Activated naive CD4-positive, alpha-beta T cell treated with anti-CD3 and anti-CD28 coated beads for 36 hours (primary cell): ENCODE measurements at regions of chrX and their contacts with region 1.

Region 1: GRCh38 chrX:110086916-110087484 is 84.1 kb downstream of the TMEM164 start:
- DNase-seq: no peak
- H3K4me3 Mint-ChIP-seq: no peak overlapping the region
- H3K27ac Mint-ChIP-seq: no peak overlapping the region
- H3K4me1 Mint-ChIP-seq: peaks cover 16% of the 10 kb centered on the region
- H3K27me3 Mint-ChIP-seq: no peaks in the 10 kb centered on the region

Region 2: DNA sequence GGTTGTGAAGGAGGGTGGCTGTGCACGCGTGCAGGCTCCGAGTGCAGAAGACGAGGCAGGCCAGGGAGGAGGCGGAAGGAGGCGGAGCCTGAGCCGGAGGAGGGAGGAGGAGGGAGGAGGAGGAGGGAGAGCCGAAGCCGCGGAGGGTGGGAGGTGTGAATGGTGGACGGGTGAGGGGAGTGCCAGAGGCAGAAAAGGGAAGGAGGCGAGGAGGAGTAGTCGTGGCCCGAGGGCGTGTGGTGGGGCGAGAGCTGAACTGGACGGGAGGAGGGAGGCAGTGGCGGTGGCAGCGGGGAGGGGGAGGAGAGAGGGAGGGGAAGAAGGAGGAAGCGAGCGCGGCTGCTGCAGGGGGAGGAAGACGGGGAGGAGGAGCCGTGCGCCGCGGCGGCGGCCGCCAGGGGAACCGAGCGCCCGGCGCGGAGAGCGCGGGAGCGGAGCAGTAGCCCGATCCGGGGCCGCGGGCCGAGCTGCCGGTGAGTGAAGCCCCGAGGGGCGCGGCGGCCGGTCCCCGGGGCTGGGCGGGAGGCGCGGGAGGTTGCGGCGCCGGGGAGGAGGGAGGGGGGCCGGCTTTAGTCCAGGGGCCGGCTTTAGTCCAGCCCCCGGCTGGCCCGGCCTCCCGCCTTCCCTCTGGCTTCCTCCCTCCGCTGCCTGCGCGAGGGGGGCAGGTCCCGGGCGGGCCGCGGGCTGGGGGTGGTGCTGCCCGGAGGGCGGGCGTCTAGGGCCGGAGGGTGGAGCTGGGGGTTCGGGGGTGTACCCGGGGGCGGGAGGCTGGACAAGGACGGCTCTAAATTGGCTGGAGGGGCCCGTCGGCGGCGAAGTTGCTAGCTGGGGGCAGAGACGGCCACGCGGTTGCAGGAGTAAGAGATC is 84.5 kb before region 1 on chrX and contains the start of gene TMEM164:
- CTCF ChIA-PET with region 1: no interaction called
- intact Hi-C with region 1: loop called (anchors 1 kb)
- DNase-seq: peak; percentile 83
- H3K4me3 Mint-ChIP-seq: peak within 1 kb of the TSS; percentile 83
- H3K27ac Mint-ChIP-seq: peak within 1 kb of the TSS; percentile 81
- H3K4me1 Mint-ChIP-seq: peaks cover 31% of the 10 kb centered on the region
- H3K27me3 Mint-ChIP-seq: no peaks in the 10 kb centered on the region
- total RNA-seq, gene TMEM164: 11.9 to 12.0 TPM

Region 3: GRCh38 chrX:110133735-110134370 is 46.9 kb after region 1 on chrX:
- CTCF ChIA-PET with region 1: no interaction called
- intact Hi-C with region 1: loop called (anchors 1 kb)
- DNase-seq: no peak
- H3K4me3 Mint-ChIP-seq: no peak overlapping the region
- H3K27ac Mint-ChIP-seq: no peak overlapping the region
- H3K4me1 Mint-ChIP-seq: peaks cover 18% of the 10 kb centered on the region
- H3K27me3 Mint-ChIP-seq: no peaks in the 10 kb centered on the region

Region 4: DNA sequence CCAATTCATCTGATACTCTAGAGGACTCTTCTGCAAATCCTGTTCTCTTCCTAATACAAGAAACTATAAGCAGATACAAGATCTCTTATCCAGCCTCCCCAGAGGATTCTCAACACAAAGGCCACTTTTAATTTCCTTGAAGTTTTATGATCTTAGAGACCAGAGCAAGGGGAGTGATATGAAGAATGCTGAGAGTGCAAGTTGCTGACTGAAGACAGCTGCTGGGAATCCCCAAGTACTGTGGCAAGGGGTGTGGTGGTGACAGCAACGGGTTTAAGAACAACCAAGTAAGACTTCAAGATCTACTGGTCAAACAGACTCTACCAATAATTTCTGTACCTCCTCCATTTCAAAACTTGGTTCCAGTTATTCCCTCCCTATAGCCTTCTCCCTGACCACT is 223.9 kb after region 1 on chrX:
- CTCF ChIA-PET with region 1: interaction called, 3 read pairs
- intact Hi-C with region 1: loop called (anchors 1 kb)
- DNase-seq: peak; percentile 55
- H3K4me3 Mint-ChIP-seq: no peak overlapping the region
- H3K27ac Mint-ChIP-seq: no peak overlapping the region
- H3K4me1 Mint-ChIP-seq: peaks cover 60% of the 10 kb centered on the region
- H3K27me3 Mint-ChIP-seq: no peaks in the 10 kb centered on the region